Left cardiac atrium (tissue), 4 donors: ENCODE measurements at regions of chr11 and their contacts with region 1.

Region 1: DNA sequence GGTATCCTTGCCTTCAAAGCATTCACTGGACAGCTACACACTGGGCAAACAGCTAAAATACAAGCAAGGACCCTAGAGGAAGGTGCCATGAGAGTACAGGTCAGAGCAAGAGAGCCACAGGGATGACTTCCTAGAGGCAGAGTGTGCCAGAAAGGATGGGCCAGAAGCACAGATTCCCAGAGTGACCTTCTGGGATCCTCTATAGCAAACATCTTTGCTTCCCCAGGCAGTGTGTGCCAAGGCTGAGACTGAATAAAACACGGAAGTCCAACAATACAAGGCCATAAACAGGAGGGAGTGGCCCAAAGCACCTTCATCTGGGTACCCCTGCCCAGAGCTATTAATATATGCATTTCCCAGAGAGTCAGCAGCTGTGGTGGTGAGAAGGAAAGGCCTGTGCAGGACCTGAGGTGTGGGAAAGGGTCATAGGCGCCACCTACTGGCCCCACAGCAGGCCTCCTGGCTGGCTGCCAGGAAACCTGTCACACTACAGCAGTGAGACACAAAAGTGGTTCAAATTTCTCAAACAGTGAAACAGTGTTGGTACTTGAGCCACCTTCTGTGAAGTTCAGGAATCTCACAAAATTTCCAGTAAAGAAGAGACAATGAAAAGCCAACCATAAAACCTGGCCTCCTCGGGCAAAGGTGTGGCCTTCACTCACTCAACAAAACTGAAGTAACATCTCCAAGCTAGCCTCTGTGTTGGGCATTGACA is 20.3 kb downstream of the CLPB start:
- DNase-seq: peak; percentile 88
- ATAC-seq: peak; percentile 79 to 81

Region 2: DNA sequence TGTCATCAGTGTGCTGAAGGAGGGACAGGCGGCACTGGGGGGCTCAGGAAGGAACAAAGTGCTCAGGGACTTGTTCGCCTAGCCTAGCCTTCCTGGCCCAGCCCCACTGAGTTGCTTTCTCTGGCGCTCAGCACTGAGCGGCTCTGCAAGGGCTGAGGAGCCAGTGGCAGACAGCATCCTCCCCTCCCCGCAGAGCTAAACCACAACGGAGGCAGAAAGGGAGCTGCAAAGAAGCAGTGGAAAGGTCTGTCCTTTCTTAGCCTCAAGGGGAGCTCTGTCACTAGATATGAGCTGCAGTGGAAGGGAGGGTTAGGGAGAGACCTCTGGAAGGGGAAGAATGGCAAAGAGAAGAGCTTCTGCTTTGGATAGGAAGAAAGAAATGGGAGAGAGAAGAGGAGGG is 80.4 kb before region 1 on chr11:
- intact Hi-C with region 1: loop called in 1 of 2 experiments (anchors 10 kb)
- DNase-seq: no peak
- ATAC-seq: no peak

Region 3: GRCh38 chr11:72352859-72353551 is 61.1 kb before region 1 on chr11:
- intact Hi-C with region 1: no loop called
- DNase-seq: no peak
- ATAC-seq: peak in 1 of 2 donors; percentile 40

Region 4: GRCh38 chr11:72378704-72379384 is 35.2 kb before region 1 on chr11:
- intact Hi-C with region 1: no loop called
- DNase-seq: peak; percentile 76
- ATAC-seq: peak; percentile 94 to 95